IMR-90 (cell line): ENCODE measurements at regions of chr5 and their contacts with region 1.

Region 1: GRCh38 chr5:94125107-94125506 is 383.7 kb upstream of the POU5F2 start:
- DNase-seq: no peak
- ATAC-seq: no peak
- H3K4me3 ChIP-seq: no peak overlapping the region
- H3K27ac ChIP-seq: no peak overlapping the region
- H3K4me1 ChIP-seq: no peaks in the 10 kb centered on the region; the same call in 1 of the 2 replicates
- H3K27me3 ChIP-seq: no peaks in the 10 kb centered on the region
- CTCF ChIP-seq: no peak
- POLR2A ChIP-seq: no peak
- RAD21 ChIP-seq: no peak

Region 2: GRCh38 chr5:92163906-92164305 is 1961.2 kb before region 1 on chr5:
- CTCF ChIA-PET with region 1: no interaction called
- POLR2A ChIA-PET with region 1: no interaction called
- dilution Hi-C with region 1: no loop called
- in situ Hi-C with region 1: no loop called
- intact Hi-C with region 1: loop called (anchors 5 kb)
- DNase-seq: no peak
- ATAC-seq: no peak
- H3K4me3 ChIP-seq: no peak overlapping the region
- H3K27ac ChIP-seq: no peak overlapping the region
- H3K4me1 ChIP-seq: no peaks in the 10 kb centered on the region
- H3K27me3 ChIP-seq: no peaks in the 10 kb centered on the region
- CTCF ChIP-seq: no peak
- POLR2A ChIP-seq: no peak
- RAD21 ChIP-seq: no peak

Region 3: DNA sequence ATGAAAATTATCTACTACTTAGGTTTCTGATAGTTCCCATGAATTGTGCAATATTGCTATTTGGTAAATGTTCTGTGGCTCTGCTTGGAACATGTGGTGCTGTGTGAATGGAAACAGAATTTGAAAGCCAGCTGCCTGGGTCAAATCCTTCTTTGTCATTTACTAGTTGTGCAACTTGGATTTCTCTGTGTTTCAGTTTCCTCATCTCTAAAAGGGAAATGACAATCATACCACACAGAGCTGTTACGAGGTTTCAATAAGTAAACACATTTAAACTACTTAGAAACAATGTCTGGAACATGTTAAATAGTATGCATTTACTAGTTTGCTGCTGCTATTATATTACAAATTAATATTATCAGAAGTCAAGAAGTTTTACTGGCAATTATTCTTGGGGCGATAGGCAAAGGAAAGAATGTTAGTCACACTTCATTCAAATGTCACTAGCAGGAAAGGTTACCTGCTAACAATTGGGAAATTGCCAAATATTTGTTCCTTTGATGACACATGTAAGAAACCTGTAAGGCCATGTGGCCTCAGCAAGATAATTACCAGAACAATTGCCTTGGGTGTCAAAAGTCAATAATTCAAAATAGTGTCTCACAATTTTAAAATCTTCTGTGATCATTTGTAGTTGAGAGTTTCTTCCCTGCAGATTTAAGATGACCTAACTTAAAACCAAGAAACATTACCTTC is 308.5 kb after region 1 on chr5:
- CTCF ChIA-PET with region 1: no interaction called
- POLR2A ChIA-PET with region 1: no interaction called
- dilution Hi-C with region 1: no loop called
- in situ Hi-C with region 1: no loop called
- intact Hi-C with region 1: no loop called
- DNase-seq: peak; percentile 64
- ATAC-seq: peak; percentile 59
- H3K4me3 ChIP-seq: no peak overlapping the region
- H3K27ac ChIP-seq: no peak overlapping the region; the same call in 1 of the 2 replicates
- H3K4me1 ChIP-seq: no peaks in the 10 kb centered on the region; the same call in 1 of the 2 replicates
- H3K27me3 ChIP-seq: no peaks in the 10 kb centered on the region
- CTCF ChIP-seq: no peak
- POLR2A ChIP-seq: no peak
- RAD21 ChIP-seq: no peak

Region 4: GRCh38 chr5:94508461-94509148 is 383.5 kb after region 1 on chr5:
- CTCF ChIA-PET with region 1: no interaction called
- POLR2A ChIA-PET with region 1: interaction called, 13 read pairs
- dilution Hi-C with region 1: no loop called
- in situ Hi-C with region 1: no loop called
- intact Hi-C with region 1: no loop called
- DNase-seq: no peak
- ATAC-seq: no peak
- H3K4me3 ChIP-seq: no peak overlapping the region
- H3K27ac ChIP-seq: no peak overlapping the region
- H3K4me1 ChIP-seq: no peaks in the 10 kb centered on the region
- H3K27me3 ChIP-seq: no peaks in the 10 kb centered on the region
- CTCF ChIP-seq: no peak
- POLR2A ChIP-seq: no peak
- RAD21 ChIP-seq: no peak